Caco-2 (cell line): ENCODE measurements at regions of chr13 and their contacts with region 1.

Region 1: GRCh38 chr13:76980075-76980718 is 11.7 kb upstream of the CLN5 start:
- DNase-seq: peak; percentile 79 to 92
- H3K4me3 ChIP-seq: peak overlapping the region; percentile 32
- H3K4me3 Mint-ChIP-seq: no peak overlapping the region
- H3K27ac Mint-ChIP-seq: no peak overlapping the region
- H3K4me1 ChIP-seq: no peaks in the 10 kb centered on the region; the same call in 1 of the 2 replicates
- H3K4me1 Mint-ChIP-seq: no peaks in the 10 kb centered on the region
- H3K27me3 ChIP-seq: no peaks in the 10 kb centered on the region
- H3K27me3 Mint-ChIP-seq: peaks cover 26% of the 10 kb centered on the region
- CTCF ChIP-seq: peak; percentile 95 to 99

Region 2: DNA sequence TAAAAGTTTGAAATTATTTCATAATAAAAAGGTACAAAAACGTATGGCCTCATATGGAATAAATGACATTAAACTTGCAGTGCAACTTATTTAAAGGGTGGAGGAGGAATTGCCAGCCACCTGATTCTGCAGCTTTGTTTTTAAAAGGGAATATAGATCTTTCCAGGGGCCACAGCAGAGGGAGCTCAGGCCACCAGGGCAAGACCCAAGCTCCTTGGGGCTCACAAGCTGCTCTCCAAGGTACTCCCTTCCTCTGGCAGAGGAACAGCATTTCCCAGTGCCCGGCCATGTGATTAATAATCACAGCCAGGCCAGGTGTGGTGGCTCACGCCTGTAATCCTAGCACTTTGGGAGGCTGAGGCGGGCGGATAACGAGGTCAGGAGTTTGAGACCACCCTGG is 25.7 kb before region 1 on chr13:
- CTCF ChIA-PET with region 1: interaction called, 3 read pairs
- POLR2A ChIA-PET with region 1: no interaction called
- intact Hi-C with region 1: loop called (anchors 1 kb)
- DNase-seq: peak in 1 of 2 experiments; percentile 13
- H3K4me3 ChIP-seq: no peak overlapping the region
- H3K4me3 Mint-ChIP-seq: no peak overlapping the region
- H3K27ac Mint-ChIP-seq: no peak overlapping the region
- H3K4me1 ChIP-seq: no peaks in the 10 kb centered on the region
- H3K4me1 Mint-ChIP-seq: no peaks in the 10 kb centered on the region
- H3K27me3 ChIP-seq: no peaks in the 10 kb centered on the region
- H3K27me3 Mint-ChIP-seq: peaks cover 5% of the 10 kb centered on the region
- CTCF ChIP-seq: peak in 1 of 2 experiments; percentile 2

Region 3: GRCh38 chr13:76969493-76970369 is 10.5 kb before region 1 on chr13:
- CTCF ChIA-PET with region 1: no interaction called
- POLR2A ChIA-PET with region 1: no interaction called
- intact Hi-C with region 1: loop called (anchors 1 kb)
- DNase-seq: peak in 1 of 2 experiments; percentile 18
- H3K4me3 ChIP-seq: no peak overlapping the region
- H3K4me3 Mint-ChIP-seq: no peak overlapping the region
- H3K27ac Mint-ChIP-seq: no peak overlapping the region
- H3K4me1 ChIP-seq: peaks cover 50% of the 10 kb centered on the region
- H3K4me1 Mint-ChIP-seq: peaks cover 21% of the 10 kb centered on the region
- H3K27me3 ChIP-seq: no peaks in the 10 kb centered on the region
- H3K27me3 Mint-ChIP-seq: no peaks in the 10 kb centered on the region
- CTCF ChIP-seq: no peak

Region 4: DNA sequence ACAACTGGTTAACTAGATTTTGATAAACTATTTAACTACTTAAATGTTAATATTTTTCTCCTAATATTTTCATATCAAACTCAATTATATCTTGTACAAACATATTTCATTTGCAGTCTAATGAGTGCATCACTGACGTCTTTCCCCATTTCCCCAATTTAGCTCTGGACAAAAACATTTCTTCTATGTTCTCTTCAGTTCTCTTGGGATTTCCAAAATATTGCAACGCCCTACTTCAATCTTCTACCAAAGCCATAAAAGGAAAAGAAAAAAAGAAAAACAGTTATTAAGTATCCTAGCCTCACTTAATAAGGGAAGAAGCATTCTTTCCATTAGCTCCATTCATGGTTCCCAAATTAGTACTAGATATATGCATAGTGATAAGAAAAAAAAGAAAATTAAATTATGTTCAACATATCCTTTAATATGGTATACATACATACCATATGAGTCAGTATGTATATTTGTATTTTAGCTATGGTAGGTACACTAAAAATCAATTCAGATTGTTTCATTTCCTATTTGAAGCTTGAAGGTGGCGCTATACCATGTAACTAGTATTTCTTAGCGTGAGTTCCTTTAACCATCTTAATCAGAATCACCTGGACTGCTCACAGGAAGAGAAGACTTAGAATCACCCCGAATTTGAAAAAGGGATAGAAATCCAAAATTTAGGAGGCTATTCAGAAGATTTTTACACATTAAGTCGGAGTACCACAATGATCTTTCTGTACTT is 36.9 kb after region 1 on chr13:
- CTCF ChIA-PET with region 1: no interaction called
- POLR2A ChIA-PET with region 1: no interaction called
- intact Hi-C with region 1: no loop called
- DNase-seq: no peak
- H3K4me3 ChIP-seq: no peak overlapping the region
- H3K4me3 Mint-ChIP-seq: no peak overlapping the region
- H3K27ac Mint-ChIP-seq: no peak overlapping the region
- H3K4me1 ChIP-seq: no peaks in the 10 kb centered on the region
- H3K4me1 Mint-ChIP-seq: no peaks in the 10 kb centered on the region
- H3K27me3 ChIP-seq: no peaks in the 10 kb centered on the region
- H3K27me3 Mint-ChIP-seq: no peaks in the 10 kb centered on the region
- CTCF ChIP-seq: peak in 1 of 2 experiments; percentile 9

Region 5: GRCh38 chr13:77143435-77143834 is 163.2 kb after region 1 on chr13:
- CTCF ChIA-PET with region 1: no interaction called
- POLR2A ChIA-PET with region 1: no interaction called
- intact Hi-C with region 1: no loop called
- DNase-seq: peak in 1 of 2 experiments; percentile 42
- H3K4me3 ChIP-seq: no peak overlapping the region
- H3K4me3 Mint-ChIP-seq: no peak overlapping the region
- H3K27ac Mint-ChIP-seq: no peak overlapping the region
- H3K4me1 ChIP-seq: no peaks in the 10 kb centered on the region
- H3K4me1 Mint-ChIP-seq: peaks cover 6% of the 10 kb centered on the region
- H3K27me3 ChIP-seq: no peaks in the 10 kb centered on the region
- H3K27me3 Mint-ChIP-seq: no peaks in the 10 kb centered on the region
- CTCF ChIP-seq: no peak

Region 6: DNA sequence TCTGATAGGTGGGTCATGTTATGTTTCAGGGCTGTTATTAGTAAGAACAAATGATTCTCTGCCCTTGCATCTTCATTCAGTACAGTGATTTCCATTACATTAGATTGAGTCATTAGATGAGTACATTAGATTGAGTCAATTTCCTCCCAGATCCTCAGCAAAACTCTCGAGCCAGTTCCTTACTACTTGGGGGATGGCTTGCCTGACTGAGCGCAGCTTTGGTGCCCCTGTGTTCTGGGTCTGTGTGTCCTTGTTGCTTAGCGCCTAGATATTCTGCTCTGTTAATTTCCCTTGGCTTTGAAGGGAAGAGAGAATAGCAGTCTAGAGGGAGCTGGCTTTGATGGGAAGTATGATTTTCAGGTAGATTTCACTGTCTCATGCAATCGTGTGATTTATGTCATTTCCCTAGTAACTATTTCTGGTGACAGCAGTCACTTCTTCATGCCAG is 536.2 kb after region 1 on chr13:
- CTCF ChIA-PET with region 1: no interaction called
- POLR2A ChIA-PET with region 1: no interaction called
- intact Hi-C with region 1: no loop called
- DNase-seq: no peak
- H3K4me3 ChIP-seq: no peak overlapping the region
- H3K4me3 Mint-ChIP-seq: no peak overlapping the region
- H3K27ac Mint-ChIP-seq: no peak overlapping the region
- H3K4me1 ChIP-seq: peaks cover 11% of the 10 kb centered on the region
- H3K4me1 Mint-ChIP-seq: peaks cover 10% of the 10 kb centered on the region
- H3K27me3 ChIP-seq: no peaks in the 10 kb centered on the region
- H3K27me3 Mint-ChIP-seq: no peaks in the 10 kb centered on the region
- CTCF ChIP-seq: no peak